Right cardiac atrium (tissue), 5 donors: ENCODE measurements at regions of chr7 and their contacts with region 1.

Region 1: DNA sequence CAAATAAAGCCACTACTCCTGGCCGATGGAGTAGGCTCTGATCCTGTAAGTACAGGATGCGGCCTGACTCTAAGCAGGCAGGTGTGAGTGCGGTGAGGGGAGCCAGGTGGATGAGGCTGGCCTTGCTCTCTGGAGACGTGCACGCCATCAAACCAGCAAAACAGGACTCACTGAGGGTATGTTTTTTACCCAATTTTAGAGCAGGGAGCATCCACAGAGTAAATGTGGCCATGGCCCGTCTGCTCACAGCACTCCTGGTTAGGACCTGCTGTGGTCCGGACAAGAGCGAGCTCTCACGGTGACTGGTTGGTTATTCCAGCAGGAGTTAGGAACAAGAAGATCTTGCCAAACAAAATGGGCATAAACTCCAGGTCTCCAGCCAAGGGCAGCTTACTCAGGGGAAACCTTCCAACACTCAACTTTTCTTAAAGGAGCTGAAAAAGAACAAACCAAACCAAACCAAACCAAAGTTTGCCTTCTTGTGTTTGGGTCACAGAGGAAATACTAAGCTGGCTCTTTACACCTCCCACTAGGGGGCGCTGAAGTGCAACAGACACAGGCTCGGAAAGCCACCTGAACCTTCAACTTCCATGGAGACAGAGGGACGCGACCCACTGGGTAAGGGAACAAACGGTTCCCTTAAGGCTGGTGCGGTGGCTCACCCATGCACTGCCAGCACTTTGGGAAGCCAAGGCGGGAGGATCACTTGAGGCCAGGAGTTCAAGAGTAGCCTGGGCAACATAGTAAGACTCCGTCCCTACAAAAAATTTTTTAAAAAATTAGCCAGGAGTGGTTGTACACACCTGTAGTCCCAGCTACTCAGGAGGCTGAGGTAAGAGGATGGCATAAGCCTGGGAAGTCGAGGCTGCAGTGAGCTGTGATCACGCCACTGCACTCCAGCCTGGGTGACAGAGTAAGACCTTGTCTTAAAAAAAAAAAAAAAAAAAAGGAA is 122.4 kb downstream of the CLEC2L start:
- DNase-seq: peak; percentile 83 to 89 (median 85)
- ATAC-seq: peak; percentile 47 to 69
- H3K4me3 ChIP-seq: no peak overlapping the region
- H3K27ac ChIP-seq: peak overlapping the region; percentile 13
- H3K4me1 ChIP-seq: peaks cover 10% of the 10 kb centered on the region
- H3K27me3 ChIP-seq: no peaks in the 10 kb centered on the region

Region 2: DNA sequence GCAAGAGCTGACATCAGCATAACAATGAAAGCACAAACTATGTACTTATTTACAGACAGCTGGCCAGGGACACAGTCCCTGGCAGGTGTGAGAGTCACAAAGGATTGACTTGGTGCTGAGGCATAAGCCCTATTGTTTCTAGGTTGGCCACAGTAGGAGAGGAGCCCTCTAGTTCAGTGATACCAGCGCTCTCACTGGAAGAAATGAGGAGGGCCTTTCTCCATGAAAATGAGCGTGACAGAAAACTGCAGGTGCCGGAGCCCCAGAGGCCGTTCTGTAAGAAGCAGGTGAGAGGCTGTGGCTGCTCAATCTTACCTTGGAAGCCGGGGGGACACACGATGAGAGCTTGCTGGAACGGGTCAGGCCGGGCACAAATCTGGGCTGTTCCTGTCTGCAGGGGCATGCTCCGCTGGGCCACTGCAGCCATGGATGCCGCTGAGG is 31.9 kb before region 1 on chr7:
- intact Hi-C with region 1: no loop called
- DNase-seq: no peak
- ATAC-seq: no peak
- H3K4me3 ChIP-seq: no peak overlapping the region
- H3K27ac ChIP-seq: no peak overlapping the region
- H3K4me1 ChIP-seq: no peaks in the 10 kb centered on the region
- H3K27me3 ChIP-seq: no peaks in the 10 kb centered on the region

Region 3: GRCh38 chr7:139731802-139732470 is 86.1 kb after region 1 on chr7:
- intact Hi-C with region 1: loop called in 1 of 4 experiments (anchors 5 kb)
- DNase-seq: peak; percentile 88 to 91 (median 90)
- ATAC-seq: peak; percentile 75 to 85
- H3K4me3 ChIP-seq: no peak overlapping the region
- H3K27ac ChIP-seq: peak overlapping the region; percentile 98
- H3K4me1 ChIP-seq: peaks cover 43% of the 10 kb centered on the region
- H3K27me3 ChIP-seq: no peaks in the 10 kb centered on the region

Region 4: DNA sequence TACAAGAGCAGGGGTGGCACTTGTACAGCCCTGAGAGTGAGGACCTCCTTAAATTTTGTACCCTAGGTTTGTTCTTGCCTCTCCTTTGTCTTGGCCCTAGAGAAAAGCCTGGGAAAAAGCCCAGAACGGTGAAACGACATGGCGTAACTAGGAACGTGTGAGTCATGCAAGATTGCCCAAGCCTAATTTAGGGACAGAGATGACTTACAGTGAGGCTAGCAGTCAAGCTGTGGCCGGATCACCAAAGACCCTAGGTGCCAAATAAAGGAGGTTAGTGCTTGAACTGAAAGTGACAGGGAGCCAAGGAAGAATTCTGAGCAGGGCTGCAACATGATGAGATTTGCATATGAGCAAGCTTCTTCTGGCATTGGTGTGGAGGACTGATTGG is 208.3 kb after region 1 on chr7:
- intact Hi-C with region 1: no loop called
- DNase-seq: peak in 1 of 3 donors; percentile 36
- ATAC-seq: peak in 1 of 2 donors; percentile 65
- H3K4me3 ChIP-seq: no peak overlapping the region
- H3K27ac ChIP-seq: no peak overlapping the region
- H3K4me1 ChIP-seq: no peaks in the 10 kb centered on the region
- H3K27me3 ChIP-seq: no peaks in the 10 kb centered on the region